ENCODE measurements at regions of chr4 and their contacts with region 1.

Region 1: DNA sequence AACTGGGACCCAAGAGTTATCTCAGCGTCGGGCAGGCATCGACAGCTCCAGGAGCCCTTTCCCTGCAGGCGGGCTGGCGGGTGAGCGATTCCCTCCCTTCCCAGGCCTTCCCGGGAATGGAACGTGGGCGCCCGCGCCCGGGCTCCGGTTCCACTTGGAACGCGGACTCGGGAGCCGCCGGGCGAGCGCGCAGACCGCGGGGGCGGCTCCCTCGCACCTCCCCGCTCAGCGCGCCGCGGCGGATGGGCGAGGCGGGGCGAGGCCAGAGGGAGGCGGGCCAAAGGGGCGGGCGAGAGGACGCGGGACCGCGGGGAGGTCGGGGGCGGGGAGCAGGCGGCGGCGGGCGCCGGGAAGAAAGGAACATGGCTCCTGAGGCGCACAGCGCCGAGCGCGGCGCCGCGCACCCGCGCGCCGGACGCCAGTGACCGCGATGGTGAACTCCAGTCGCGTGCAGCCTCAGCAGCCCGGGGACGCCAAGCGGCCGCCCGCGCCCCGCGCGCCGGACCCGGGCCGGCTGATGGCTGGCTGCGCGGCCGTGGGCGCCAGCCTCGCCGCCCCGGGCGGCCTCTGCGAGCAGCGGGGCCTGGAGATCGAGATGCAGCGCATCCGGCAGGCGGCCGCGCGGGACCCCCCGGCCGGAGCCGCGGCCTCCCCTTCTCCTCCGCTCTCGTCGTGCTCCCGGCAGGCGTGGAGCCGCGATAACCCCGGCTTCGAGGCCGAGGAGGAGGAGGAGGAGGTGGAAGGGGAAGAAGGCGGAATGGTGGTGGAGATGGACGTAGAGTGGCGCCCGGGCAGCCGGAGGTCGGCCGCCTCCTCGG is at the start of gene PKD2:
- DNase-seq: peak; percentile 81
- H3K4me3 Mint-ChIP-seq: peak within 1 kb of the TSS; percentile 87
- H3K27ac Mint-ChIP-seq: peak within 1 kb of the TSS; percentile 52
- H3K4me1 Mint-ChIP-seq: peaks cover 14% of the 10 kb centered on the region
- H3K27me3 Mint-ChIP-seq: peaks cover 10% of the 10 kb centered on the region
- total RNA-seq, gene PKD2: 1.7 to 1.9 TPM

Region 2: GRCh38 chr4:87601361-87601760 is 406.2 kb before region 1 on chr4:
- CTCF ChIA-PET with region 1: no interaction called
- intact Hi-C with region 1: no loop called
- DNase-seq: no peak
- H3K4me3 Mint-ChIP-seq: no peak overlapping the region
- H3K27ac Mint-ChIP-seq: no peak overlapping the region
- H3K4me1 Mint-ChIP-seq: no peaks in the 10 kb centered on the region
- H3K27me3 Mint-ChIP-seq: peaks cover 19% of the 10 kb centered on the region

Region 3: DNA sequence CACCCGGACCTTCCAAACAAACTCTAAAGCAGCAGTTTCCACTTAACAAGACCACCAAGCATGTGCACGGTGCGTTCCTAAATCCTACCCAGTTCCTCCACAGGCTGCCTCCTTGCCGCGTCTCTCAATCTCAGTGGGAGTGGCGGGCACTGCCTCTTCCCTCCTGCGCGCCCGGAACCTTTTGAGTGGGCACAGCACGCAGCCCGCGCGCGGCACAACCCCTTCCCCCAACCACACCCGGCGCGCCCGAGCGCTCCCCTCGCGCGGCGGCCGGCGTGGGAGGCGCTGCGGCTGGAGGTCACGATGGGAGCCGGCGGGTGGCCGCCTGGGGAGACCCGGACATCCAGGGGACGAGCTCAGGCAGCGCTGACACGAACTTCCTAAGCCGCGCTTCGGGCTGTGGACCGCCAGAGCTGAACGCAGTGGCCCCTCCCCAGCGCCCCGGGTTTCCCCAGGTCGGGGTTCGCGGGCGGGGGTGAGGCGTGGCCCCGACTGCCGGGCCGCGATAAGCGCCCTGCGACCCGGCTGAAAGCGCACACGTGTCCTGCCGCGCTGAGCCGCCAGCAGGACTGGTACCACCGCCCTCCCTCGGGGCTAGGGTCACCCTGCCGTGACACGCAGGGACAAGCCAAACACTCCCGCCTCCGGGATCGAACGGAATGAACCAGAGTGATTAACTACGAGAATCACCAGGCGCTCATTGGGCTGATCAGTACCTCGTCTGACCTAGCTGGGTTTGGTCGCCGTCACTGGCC is 151.2 kb after region 1 on chr4 and contains the start of gene ABCG2:
- CTCF ChIA-PET with region 1: no interaction called
- intact Hi-C with region 1: loop called (anchors 5 kb)
- DNase-seq: peak; percentile 34
- H3K4me3 Mint-ChIP-seq: peak within 1 kb of the TSS; percentile 73
- H3K27ac Mint-ChIP-seq: no peak within 1 kb of the TSS
- H3K4me1 Mint-ChIP-seq: peaks cover 12% of the 10 kb centered on the region
- H3K27me3 Mint-ChIP-seq: peaks cover 20% of the 10 kb centered on the region
- total RNA-seq, gene ABCG2: 0.35 to 0.55 TPM

Region 4: GRCh38 chr4:88573995-88574394 is 566.5 kb after region 1 on chr4:
- CTCF ChIA-PET with region 1: no interaction called
- intact Hi-C with region 1: no loop called
- DNase-seq: no peak
- H3K4me3 Mint-ChIP-seq: no peak overlapping the region
- H3K27ac Mint-ChIP-seq: no peak overlapping the region
- H3K4me1 Mint-ChIP-seq: no peaks in the 10 kb centered on the region
- H3K27me3 Mint-ChIP-seq: peaks cover 3% of the 10 kb centered on the region

Region 5: DNA sequence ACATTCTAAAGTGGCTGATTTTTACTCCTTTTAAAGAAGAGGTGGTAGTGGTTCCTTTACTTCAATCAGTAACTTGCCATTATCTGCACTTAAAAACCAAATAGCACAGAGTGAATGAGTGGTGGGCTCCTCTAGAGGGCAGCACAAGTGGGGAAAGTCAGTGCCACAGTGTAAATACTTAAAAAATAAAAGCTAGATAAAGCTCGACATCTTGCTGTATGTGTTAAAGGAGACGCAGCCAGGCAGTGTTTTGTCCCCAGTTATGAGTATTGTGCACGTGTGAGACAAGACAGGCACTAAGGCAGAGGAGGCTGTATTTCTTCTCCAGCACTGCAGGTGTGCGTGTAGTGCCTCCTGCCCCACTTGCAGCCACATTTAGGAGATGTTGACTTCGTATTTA is 665.5 kb after region 1 on chr4:
- CTCF ChIA-PET with region 1: no interaction called
- intact Hi-C with region 1: no loop called
- DNase-seq: peak; percentile 62
- H3K4me3 Mint-ChIP-seq: no peak overlapping the region
- H3K27ac Mint-ChIP-seq: no peak overlapping the region
- H3K4me1 Mint-ChIP-seq: peaks cover 6% of the 10 kb centered on the region
- H3K27me3 Mint-ChIP-seq: no peaks in the 10 kb centered on the region

Measured in activated naive CD4-positive, alpha-beta T cell treated with anti-CD3 and anti-CD28 coated beads for 36 hours (primary cell).